Spleen (tissue), 13 donors: ENCODE measurements at regions of chr12 and their contacts with region 1.

Region 1: GRCh38 chr12:52380271-52380694 is 5.2 kb downstream of the KRT84 start:
- DNase-seq: no peak
- H3K4me3 ChIP-seq: no peak overlapping the region
- H3K27ac ChIP-seq: no peak overlapping the region
- H3K4me1 ChIP-seq: no peaks in the 10 kb centered on the region
- H3K27me3 ChIP-seq: peaks cover 0 to 27% (median 0%) of the 10 kb centered on the region in 7 donors
- CTCF ChIP-seq: peak in 4 of 11 experiments; percentile 5 to 29 (median 23)
- POLR2A ChIP-seq: no peak

Region 2: GRCh38 chr12:51823875-51824565 is 556.3 kb before region 1 on chr12:
- intact Hi-C with region 1: no loop called
- DNase-seq: no peak
- H3K4me3 ChIP-seq: no peak overlapping the region
- H3K27ac ChIP-seq: no peak overlapping the region
- H3K4me1 ChIP-seq: peaks cover 3 to 73% (median 44%) of the 10 kb centered on the region in 6 donors
- H3K27me3 ChIP-seq: peaks cover 0 to 44% (median 4%) of the 10 kb centered on the region in 7 donors
- CTCF ChIP-seq: peak in 7 of 11 experiments; percentile 32 to 51 (median 40)
- POLR2A ChIP-seq: no peak

Region 3: DNA sequence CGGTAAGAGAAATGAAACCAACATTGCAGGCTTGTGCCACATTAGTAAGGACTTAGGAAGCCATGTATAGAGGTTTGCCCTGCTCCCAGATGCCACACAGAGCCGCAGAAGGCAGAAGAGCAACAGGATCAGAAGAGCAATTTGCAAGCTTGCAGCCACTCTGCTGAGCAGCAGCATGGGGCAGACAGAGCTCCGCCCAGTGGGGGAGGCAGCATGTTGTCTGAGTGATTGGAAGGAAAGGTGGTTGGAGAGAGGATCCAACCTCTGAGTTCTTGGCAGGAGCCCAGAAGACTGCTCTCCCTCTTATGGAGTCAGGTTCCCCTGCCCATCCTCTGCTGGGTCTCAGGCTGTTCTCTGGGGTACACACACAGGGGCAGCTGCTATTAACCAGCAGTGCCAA is 115.1 kb after region 1 on chr12:
- intact Hi-C with region 1: loop called (anchors 10 kb)
- DNase-seq: no peak
- H3K4me3 ChIP-seq: no peak overlapping the region
- H3K27ac ChIP-seq: peak overlapping the region in 1 of 8 donors; percentile 21
- H3K4me1 ChIP-seq: peaks cover 0 to 15% (median 6%) of the 10 kb centered on the region in 6 donors
- H3K27me3 ChIP-seq: peaks cover 0 to 37% (median 0%) of the 10 kb centered on the region in 7 donors
- CTCF ChIP-seq: no peak
- POLR2A ChIP-seq: no peak